ENCODE measurements at regions of chr17 and their contacts with region 1.

Region 1: GRCh38 chr17:12230481-12231354 is 210.0 kb downstream of the MAP2K4 start:
- DNase-seq: no peak
- ATAC-seq: no peak
- H3K4me3 ChIP-seq: no peak overlapping the region
- H3K27ac ChIP-seq: peak overlapping the region; percentile 62 to 70
- H3K4me1 ChIP-seq: peaks cover 9 to 15% of the 10 kb centered on the region in 2 donors
- H3K27me3 ChIP-seq: no peaks in the 10 kb centered on the region

Region 2: GRCh38 chr17:12195418-12195817 is 35.3 kb before region 1 on chr17:
- intact Hi-C with region 1: loop called in 1 of 2 experiments (anchors 5 kb)
- DNase-seq: no peak
- ATAC-seq: no peak
- H3K4me3 ChIP-seq: no peak overlapping the region
- H3K27ac ChIP-seq: no peak overlapping the region
- H3K4me1 ChIP-seq: no peaks in the 10 kb centered on the region
- H3K27me3 ChIP-seq: no peaks in the 10 kb centered on the region